ENCODE measurements at regions of chrX and their contacts with region 1.

Region 1: DNA sequence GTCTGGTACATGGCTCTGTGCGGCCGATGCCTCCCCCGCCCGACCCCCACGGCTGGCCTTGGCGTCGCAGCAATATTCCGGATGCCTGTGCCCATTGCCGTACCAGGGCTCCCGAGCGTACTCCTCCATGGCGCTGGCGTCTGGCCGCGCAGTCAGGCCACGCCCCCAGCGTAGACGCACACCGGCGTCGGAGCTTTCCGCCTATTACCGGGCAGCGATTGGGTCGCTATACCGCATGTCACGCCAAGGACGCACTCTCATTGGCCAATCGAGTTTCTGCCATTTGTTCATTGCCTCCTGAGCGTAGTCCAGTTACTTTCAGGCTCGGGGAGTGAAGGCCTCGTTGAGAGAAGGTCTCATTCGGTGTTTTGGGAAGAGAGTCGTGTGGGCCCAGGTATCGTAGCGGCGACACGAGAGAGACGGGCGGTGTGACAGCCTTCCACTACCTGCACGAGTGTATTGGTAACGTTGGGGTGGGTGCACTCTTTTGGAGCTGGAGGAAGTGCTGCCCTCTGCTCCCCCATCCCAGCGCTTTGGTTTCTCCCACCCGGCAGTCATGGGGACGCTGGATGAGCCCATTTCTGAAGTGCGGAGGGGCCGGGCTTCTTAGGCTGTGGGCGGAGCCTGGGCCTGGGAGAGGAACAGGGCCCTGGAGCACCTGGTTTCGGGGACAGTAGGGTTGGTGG is at the starts of genes PQBP1 and TIMM17B:
- DNase-seq: peak; percentile 72 to 96 (median 84)
- ATAC-seq: peak; percentile 86
- H3K4me3 ChIP-seq: peak within 1 kb of the TSS; percentile 87 to 98
- H3K4me3 Mint-ChIP-seq: peak within 1 kb of the TSS; percentile 88
- H3K27ac ChIP-seq: peak within 1 kb of the TSS; percentile 98
- H3K27ac Mint-ChIP-seq: peak within 1 kb of the TSS; percentile 95
- H3K4me1 ChIP-seq: peaks cover 21% of the 10 kb centered on the region
- H3K4me1 Mint-ChIP-seq: peaks cover 29% of the 10 kb centered on the region
- H3K27me3 ChIP-seq: no peaks in the 10 kb centered on the region
- H3K27me3 Mint-ChIP-seq: no peaks in the 10 kb centered on the region
- CTCF ChIP-seq: no peak
- total RNA-seq, gene PQBP1: 79.9 to 82.1 TPM
- total RNA-seq, gene TIMM17B: 35.0 to 37.6 TPM

Region 2: GRCh38 chrX:48574270-48575266 is 323.2 kb before region 1 on chrX and contains the start of gene RBM3:
- CTCF ChIA-PET with region 1: no interaction called
- POLR2A ChIA-PET with region 1: no interaction called
- intact Hi-C with region 1: loop called in 1 of 2 experiments (anchors 10 kb)
- DNase-seq: peak; percentile 80 to 97 (median 91)
- ATAC-seq: peak; percentile 91
- H3K4me3 ChIP-seq: peak within 1 kb of the TSS; percentile 70 to 97
- H3K4me3 Mint-ChIP-seq: peak within 1 kb of the TSS; percentile 97
- H3K27ac ChIP-seq: peak within 1 kb of the TSS; percentile 100
- H3K27ac Mint-ChIP-seq: peak within 1 kb of the TSS; percentile 99
- H3K4me1 ChIP-seq: peaks cover 24% of the 10 kb centered on the region
- H3K4me1 Mint-ChIP-seq: peaks cover 25% of the 10 kb centered on the region
- H3K27me3 ChIP-seq: no peaks in the 10 kb centered on the region
- H3K27me3 Mint-ChIP-seq: no peaks in the 10 kb centered on the region
- CTCF ChIP-seq: peak; percentile 21
- total RNA-seq, gene RBM3: 442 to 444 TPM

Region 3: DNA sequence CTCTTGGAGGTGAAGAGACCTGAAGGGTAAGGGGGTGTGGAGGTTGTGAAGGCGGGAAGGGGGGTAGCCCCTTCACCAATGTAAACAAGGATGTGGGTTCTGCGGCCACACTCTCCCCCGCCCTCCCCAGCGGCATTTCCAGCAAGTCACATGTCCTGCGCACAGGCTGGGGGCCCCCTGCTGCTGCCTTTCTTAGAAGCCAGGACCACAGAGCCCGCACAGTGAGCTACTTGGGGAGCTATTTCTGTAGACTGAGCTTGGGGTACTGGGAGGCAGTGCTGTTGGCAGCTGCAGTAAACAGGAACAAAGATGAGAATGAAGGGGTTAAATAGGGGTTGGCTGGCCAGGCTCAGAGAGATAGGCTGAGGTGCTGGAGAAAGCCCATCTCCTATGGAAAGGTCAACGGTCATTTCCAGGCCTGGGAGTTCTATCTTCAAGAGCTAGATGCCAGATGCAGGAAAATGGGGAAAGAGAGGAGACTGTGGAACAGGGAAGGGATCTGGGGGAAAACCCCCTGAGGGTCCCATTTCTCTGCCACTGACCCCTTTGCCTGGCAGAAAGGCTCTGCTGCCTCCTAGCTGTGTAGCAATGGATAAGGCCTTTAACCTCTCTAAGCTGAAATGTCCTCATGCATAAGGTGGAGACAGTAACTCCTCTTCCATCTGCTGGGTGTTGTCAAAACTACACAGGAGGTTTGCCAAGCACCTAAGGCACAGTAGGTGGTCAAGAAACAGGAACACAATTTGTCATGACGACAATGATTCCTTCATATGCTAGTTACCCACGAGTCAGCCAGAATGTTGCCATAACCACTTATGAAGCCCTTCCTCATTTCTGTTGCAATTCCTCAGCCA is 39.5 kb after region 1 on chrX:
- CTCF ChIA-PET with region 1: interaction called, 9 read pairs
- POLR2A ChIA-PET with region 1: interaction called, 11 read pairs
- intact Hi-C with region 1: loop called in 1 of 2 experiments (anchors 1 kb)
- DNase-seq: peak; percentile 79 to 95 (median 89)
- ATAC-seq: peak; percentile 67
- H3K4me3 ChIP-seq: peak overlapping the region; percentile 33 to 45
- H3K4me3 Mint-ChIP-seq: peak overlapping the region; percentile 83
- H3K27ac ChIP-seq: peak overlapping the region; percentile 82 to 89
- H3K27ac Mint-ChIP-seq: peak overlapping the region; percentile 99
- H3K4me1 ChIP-seq: peaks cover 81% of the 10 kb centered on the region
- H3K4me1 Mint-ChIP-seq: peaks cover 76% of the 10 kb centered on the region
- H3K27me3 ChIP-seq: no peaks in the 10 kb centered on the region
- H3K27me3 Mint-ChIP-seq: no peaks in the 10 kb centered on the region
- CTCF ChIP-seq: no peak

Region 4: GRCh38 chrX:49019599-49020249 is 122.0 kb after region 1 on chrX:
- CTCF ChIA-PET with region 1: no interaction called
- POLR2A ChIA-PET with region 1: no interaction called
- intact Hi-C with region 1: no loop called
- DNase-seq: no peak
- ATAC-seq: no peak
- H3K4me3 ChIP-seq: no peak overlapping the region
- H3K4me3 Mint-ChIP-seq: no peak overlapping the region
- H3K27ac ChIP-seq: no peak overlapping the region
- H3K27ac Mint-ChIP-seq: peak overlapping the region; percentile 32
- H3K4me1 ChIP-seq: no peaks in the 10 kb centered on the region
- H3K4me1 Mint-ChIP-seq: no peaks in the 10 kb centered on the region
- H3K27me3 ChIP-seq: no peaks in the 10 kb centered on the region
- H3K27me3 Mint-ChIP-seq: no peaks in the 10 kb centered on the region
- CTCF ChIP-seq: no peak

Region 5: GRCh38 chrX:49043220-49043986 is 145.6 kb after region 1 on chrX and contains the start of gene TFE3:
- CTCF ChIA-PET with region 1: no interaction called
- POLR2A ChIA-PET with region 1: no interaction called
- intact Hi-C with region 1: no loop called
- DNase-seq: peak; percentile 88 to 98 (median 93)
- ATAC-seq: peak; percentile 89
- H3K4me3 ChIP-seq: peak within 1 kb of the TSS; percentile 50 to 56
- H3K4me3 Mint-ChIP-seq: peak within 1 kb of the TSS; percentile 84
- H3K27ac ChIP-seq: peak within 1 kb of the TSS; percentile 73 to 92
- H3K27ac Mint-ChIP-seq: peak within 1 kb of the TSS; percentile 93
- H3K4me1 ChIP-seq: peaks cover 21% of the 10 kb centered on the region
- H3K4me1 Mint-ChIP-seq: peaks cover 35% of the 10 kb centered on the region
- H3K27me3 ChIP-seq: no peaks in the 10 kb centered on the region
- H3K27me3 Mint-ChIP-seq: no peaks in the 10 kb centered on the region
- CTCF ChIP-seq: no peak
- total RNA-seq, gene TFE3: 35.7 to 39.7 TPM

Region 6: GRCh38 chrX:49073601-49074571 is 176.1 kb after region 1 on chrX and contains the start of gene PRAF2:
- CTCF ChIA-PET with region 1: no interaction called
- POLR2A ChIA-PET with region 1: no interaction called
- intact Hi-C with region 1: loop called in 1 of 2 experiments (anchors 10 kb)
- DNase-seq: peak; percentile 74 to 95 (median 89)
- ATAC-seq: peak; percentile 96
- H3K4me3 ChIP-seq: peak within 1 kb of the TSS; percentile 64 to 76
- H3K4me3 Mint-ChIP-seq: peak within 1 kb of the TSS; percentile 79
- H3K27ac ChIP-seq: peak within 1 kb of the TSS; percentile 81 to 82
- H3K27ac Mint-ChIP-seq: peak within 1 kb of the TSS; percentile 91
- H3K4me1 ChIP-seq: peaks cover 13% of the 10 kb centered on the region
- H3K4me1 Mint-ChIP-seq: peaks cover 17% of the 10 kb centered on the region
- H3K27me3 ChIP-seq: no peaks in the 10 kb centered on the region
- H3K27me3 Mint-ChIP-seq: no peaks in the 10 kb centered on the region
- CTCF ChIP-seq: no peak
- total RNA-seq, gene PRAF2: 16.7 to 17.5 TPM

Region 7: DNA sequence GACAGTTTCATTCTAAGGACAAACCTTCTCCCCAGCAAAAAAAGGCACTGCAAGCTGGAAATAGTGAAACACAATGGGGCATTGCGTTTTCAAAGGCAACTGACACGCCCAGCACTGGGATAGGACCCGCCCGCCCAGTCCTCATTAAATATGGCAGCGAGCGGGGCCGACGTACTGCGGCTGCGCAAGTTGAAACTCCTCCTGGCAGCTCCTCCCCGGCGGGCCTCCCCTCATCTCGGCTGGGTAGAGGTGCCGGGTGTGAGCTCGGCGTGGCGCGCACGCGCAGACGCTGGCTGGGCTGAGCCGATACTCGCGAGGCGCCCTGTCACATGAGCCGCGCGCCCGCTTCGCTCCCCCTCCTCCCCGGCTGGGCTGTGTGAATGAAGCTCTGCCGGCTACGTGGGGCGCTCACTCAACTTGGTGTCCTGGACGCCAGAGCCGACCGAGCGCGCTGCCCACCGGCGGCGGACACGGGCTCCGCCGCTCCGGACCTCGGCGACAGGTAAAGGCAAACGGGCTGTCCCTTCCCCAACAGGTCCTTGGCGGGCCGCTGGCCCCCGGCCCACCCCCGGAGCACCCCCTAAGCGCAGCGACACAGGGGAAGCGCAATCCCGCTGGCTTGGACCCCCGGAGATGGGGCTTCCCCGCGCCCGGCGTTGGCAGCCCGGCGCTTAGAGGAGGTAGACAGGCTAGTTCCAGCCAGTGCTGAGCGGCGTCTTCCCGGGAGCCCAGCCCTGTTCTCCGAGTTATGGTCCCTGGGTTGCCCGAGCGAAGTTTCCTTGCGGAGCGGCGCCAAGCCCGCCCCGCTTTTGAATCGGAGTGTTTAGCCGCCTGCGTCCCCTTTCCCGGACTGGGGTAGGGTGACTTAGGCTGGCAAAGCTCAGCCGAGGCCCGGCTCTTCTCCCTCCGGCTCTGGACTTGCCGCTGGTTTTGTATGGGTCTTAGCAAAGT is 1024.8 kb after region 1 on chrX and contains the start of gene CLCN5:
- CTCF ChIA-PET with region 1: no interaction called
- POLR2A ChIA-PET with region 1: no interaction called
- intact Hi-C with region 1: loop called in 1 of 2 experiments (anchors 10 kb)
- DNase-seq: peak; percentile 85 to 97 (median 92)
- ATAC-seq: peak; percentile 92
- H3K4me3 ChIP-seq: peak within 1 kb of the TSS; percentile 65 to 74
- H3K4me3 Mint-ChIP-seq: peak within 1 kb of the TSS; percentile 82
- H3K27ac ChIP-seq: peak within 1 kb of the TSS; percentile 39 to 47
- H3K27ac Mint-ChIP-seq: no peak within 1 kb of the TSS
- H3K4me1 ChIP-seq: peaks cover 12% of the 10 kb centered on the region
- H3K4me1 Mint-ChIP-seq: peaks cover 8% of the 10 kb centered on the region
- H3K27me3 ChIP-seq: no peaks in the 10 kb centered on the region
- H3K27me3 Mint-ChIP-seq: no peaks in the 10 kb centered on the region
- CTCF ChIP-seq: no peak
- total RNA-seq, gene CLCN5: 0.53 to 0.87 TPM